B cell (primary cell): ENCODE measurements at regions of chr6 and their contacts with region 1.

Region 1: GRCh38 chr6:129860908-129861665 is at the start of gene TMEM244:
- DNase-seq: no peak
- ATAC-seq: peak; percentile 17
- H3K4me3 ChIP-seq: peak within 1 kb of the TSS in 1 of 5 experiments; percentile 31
- H3K4me3 Mint-ChIP-seq: peak within 1 kb of the TSS; percentile 48
- H3K27ac ChIP-seq: no peak within 1 kb of the TSS
- H3K27ac Mint-ChIP-seq: peak within 1 kb of the TSS; percentile 47
- H3K4me1 ChIP-seq: no peaks in the 10 kb centered on the region
- H3K4me1 Mint-ChIP-seq: peaks cover 10% of the 10 kb centered on the region
- H3K27me3 ChIP-seq: no peaks in the 10 kb centered on the region
- H3K27me3 Mint-ChIP-seq: no peaks in the 10 kb centered on the region
- CTCF ChIP-seq: no peak
- total RNA-seq, gene TMEM244: not detected in 2 replicates

Region 2: GRCh38 chr6:129774697-129775447 is 86.2 kb before region 1 on chr6:
- CTCF ChIA-PET with region 1: interaction called, 3 read pairs
- POLR2A ChIA-PET with region 1: no interaction called
- intact Hi-C with region 1: loop called (anchors 10 kb)
- DNase-seq: peak; percentile 43
- ATAC-seq: peak; percentile 49
- H3K4me3 ChIP-seq: no peak overlapping the region
- H3K4me3 Mint-ChIP-seq: no peak overlapping the region
- H3K27ac ChIP-seq: no peak overlapping the region
- H3K27ac Mint-ChIP-seq: no peak overlapping the region
- H3K4me1 ChIP-seq: no peaks in the 10 kb centered on the region
- H3K4me1 Mint-ChIP-seq: peaks cover 3% of the 10 kb centered on the region
- H3K27me3 ChIP-seq: no peaks in the 10 kb centered on the region
- H3K27me3 Mint-ChIP-seq: peaks cover 19% of the 10 kb centered on the region
- CTCF ChIP-seq: peak; percentile 72

Region 3: GRCh38 chr6:129989396-129989795 is 128.3 kb after region 1 on chr6:
- CTCF ChIA-PET with region 1: no interaction called
- POLR2A ChIA-PET with region 1: no interaction called
- intact Hi-C with region 1: no loop called
- DNase-seq: no peak
- ATAC-seq: no peak
- H3K4me3 ChIP-seq: no peak overlapping the region
- H3K4me3 Mint-ChIP-seq: no peak overlapping the region
- H3K27ac ChIP-seq: no peak overlapping the region
- H3K27ac Mint-ChIP-seq: no peak overlapping the region
- H3K4me1 ChIP-seq: no peaks in the 10 kb centered on the region
- H3K4me1 Mint-ChIP-seq: no peaks in the 10 kb centered on the region
- H3K27me3 ChIP-seq: no peaks in the 10 kb centered on the region
- H3K27me3 Mint-ChIP-seq: peaks cover 11% of the 10 kb centered on the region
- CTCF ChIP-seq: no peak